Astrocyte of the cerebellum (primary cell): ENCODE measurements at regions of chr7 and their contacts with region 1.

Region 1: GRCh38 chr7:129664029-129665012 is 52.8 kb downstream of the NRF1 start:
- DNase-seq: peak; percentile 72
- H3K4me3 ChIP-seq: no peak overlapping the region
- CTCF ChIP-seq: peak; percentile 45

Region 2: DNA sequence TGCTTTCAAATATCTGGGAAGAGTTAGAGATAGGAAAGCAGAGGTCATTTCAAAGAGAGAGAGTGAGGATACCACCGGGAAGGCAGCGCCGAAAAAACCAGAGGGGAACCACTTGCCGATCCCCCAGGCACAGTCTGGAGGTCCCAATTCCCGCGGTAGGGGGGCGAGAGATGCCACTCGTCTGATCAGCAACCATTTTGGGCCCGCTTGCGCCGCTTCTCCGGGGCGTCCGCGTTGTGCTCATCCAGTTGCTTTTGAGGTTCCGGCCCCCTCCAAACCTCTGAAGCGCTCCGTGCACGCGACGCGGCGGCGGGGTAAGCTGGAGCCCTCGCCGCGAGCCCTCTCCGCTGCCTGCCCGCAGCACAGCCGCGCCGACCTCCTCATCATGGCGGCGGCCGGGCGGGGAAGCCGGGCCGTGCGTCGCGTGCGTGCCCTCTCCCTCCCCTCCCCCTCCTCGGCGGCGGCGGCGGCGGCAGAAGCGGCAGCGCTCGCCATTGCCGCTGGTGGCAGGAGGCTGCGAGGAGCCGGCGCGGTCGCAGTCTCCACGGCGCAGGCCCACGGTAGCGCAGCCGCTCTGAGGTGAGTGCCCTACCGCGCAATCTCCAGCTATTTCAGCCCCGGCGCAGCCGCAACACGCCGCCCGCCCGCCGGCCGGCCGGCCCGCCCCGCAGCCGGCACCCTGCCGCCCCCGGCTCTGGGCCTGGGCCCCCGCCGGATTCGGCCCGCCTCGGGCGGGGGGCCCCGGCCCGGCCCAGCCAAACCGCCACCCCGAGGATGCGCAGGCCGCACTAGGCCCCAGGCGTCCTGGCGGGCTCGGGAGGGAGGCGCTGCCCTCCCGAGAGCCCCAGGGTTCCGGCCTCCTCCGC is 52.8 kb before region 1 on chr7 and contains the start of gene NRF1:
- in situ Hi-C with region 1: no loop called
- DNase-seq: peak; percentile 73
- H3K4me3 ChIP-seq: peak within 1 kb of the TSS; percentile 90
- CTCF ChIP-seq: no peak

Region 3: GRCh38 chr7:129702316-129702715 is 38.0 kb after region 1 on chr7:
- in situ Hi-C with region 1: no loop called
- DNase-seq: no peak
- H3K4me3 ChIP-seq: no peak overlapping the region
- CTCF ChIP-seq: no peak

Region 4: DNA sequence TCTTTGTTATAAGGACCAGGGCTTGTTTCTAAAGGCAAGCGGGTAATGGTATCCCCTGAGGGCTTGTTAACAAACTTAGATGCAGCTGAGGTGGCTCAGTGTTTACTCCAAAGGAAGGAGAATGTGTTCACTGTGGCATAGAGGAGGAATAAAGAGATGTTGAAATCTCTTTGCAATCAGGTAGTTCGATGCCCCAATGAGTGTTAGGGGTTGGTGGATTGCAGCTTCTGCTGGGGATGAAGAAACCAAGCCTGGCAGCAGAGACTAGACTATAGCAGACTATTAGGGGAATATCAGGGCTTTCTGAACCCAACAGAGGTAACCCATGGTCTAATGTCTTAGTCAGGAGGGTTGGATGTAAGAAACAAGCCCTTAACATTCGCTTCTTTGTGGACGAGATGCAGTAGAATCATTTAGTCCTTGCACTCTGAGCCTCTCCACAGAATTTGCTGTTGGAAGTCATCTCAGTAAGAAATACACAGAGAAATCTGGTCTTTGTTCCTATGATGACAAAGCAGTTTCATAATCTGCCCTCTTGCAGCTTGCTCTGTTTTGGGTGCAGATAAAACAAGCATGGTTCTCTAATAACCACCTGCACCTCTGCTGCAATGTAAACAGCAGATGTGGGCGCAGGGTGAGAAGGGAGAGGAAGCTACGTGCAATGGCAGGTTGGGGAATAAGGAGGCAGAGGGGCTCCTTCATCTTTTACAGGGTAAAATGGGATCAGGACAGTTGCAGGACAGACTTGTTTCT is 55.8 kb after region 1 on chr7:
- in situ Hi-C with region 1: no loop called
- DNase-seq: no peak
- H3K4me3 ChIP-seq: no peak overlapping the region
- CTCF ChIP-seq: no peak

Region 5: DNA sequence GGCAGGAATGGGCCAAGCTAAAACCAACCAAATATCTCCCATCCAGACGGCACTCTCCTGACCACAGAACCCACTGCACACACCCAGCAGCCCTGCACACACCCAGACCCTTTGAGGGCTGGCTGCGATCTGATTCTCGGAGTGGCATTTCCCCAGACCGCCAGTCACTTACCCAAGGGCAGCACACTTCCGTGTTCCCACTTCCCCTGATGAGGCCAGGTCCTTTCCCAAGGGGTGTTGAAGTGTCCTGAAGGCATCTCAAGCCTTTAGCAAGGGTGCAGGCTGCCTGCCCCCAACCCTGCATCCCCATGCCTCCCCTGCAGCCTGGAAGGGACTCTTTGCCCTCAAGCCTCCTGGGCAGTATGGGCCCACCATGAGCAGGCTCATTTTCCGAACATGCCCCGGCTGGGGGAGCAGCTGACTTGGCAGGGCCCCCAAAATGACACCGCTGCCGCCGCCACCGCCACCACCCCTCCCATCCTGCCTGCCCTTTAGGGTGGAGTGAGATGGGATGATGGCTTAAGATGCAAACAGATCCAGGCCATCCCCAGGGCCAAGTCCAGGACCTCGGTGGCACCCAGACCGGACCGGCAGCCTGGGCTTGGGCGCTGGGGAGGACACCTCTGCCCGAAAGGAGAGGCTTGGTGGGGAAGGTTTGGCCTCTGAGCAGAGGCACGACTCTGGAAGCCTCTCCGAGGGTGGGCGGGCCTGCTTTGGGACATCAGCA is 107.0 kb after region 1 on chr7:
- in situ Hi-C with region 1: no loop called
- DNase-seq: no peak
- H3K4me3 ChIP-seq: no peak overlapping the region
- CTCF ChIP-seq: no peak

Region 6: GRCh38 chr7:129816742-129817141 is 152.4 kb after region 1 on chr7:
- in situ Hi-C with region 1: loop called (anchors 10 kb)
- DNase-seq: no peak
- H3K4me3 ChIP-seq: no peak overlapping the region
- CTCF ChIP-seq: no peak